ENCODE measurements at regions of chr11 and their contacts with region 1.

Region 1: GRCh38 chr11:123707606-123708205 is 33.8 kb downstream of the ZNF202 start:
- DNase-seq: peak; percentile 78
- H3K4me3 Mint-ChIP-seq: no peak overlapping the region
- H3K27ac Mint-ChIP-seq: no peak overlapping the region
- H3K4me1 Mint-ChIP-seq: no peaks in the 10 kb centered on the region
- H3K27me3 Mint-ChIP-seq: peaks cover 5% of the 10 kb centered on the region

Region 2: DNA sequence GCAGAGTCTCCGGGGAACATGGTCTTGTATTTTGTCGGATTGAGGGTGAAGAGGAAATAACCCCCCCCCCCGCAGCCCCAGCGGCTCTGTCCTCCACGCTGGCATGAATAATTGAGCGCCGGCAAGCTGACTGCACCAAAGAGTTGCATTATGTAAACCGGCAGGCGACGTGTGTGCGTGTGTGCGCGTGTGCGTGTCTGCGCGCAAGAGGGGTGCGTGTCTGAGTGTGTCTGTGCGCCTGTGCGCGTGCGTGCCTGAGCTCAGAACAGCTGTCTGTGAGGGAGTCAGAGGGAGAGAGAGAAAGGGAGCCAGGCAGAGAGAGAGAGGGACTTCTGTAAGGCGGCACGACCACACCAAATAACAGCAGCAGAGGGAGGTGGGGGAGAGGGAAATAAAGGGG is 147.7 kb before region 1 on chr11:
- CTCF ChIA-PET with region 1: no interaction called
- DNase-seq: peak; percentile 65
- H3K4me3 Mint-ChIP-seq: peak overlapping the region; percentile 45
- H3K27ac Mint-ChIP-seq: peak overlapping the region; percentile 42
- H3K4me1 Mint-ChIP-seq: peaks cover 19% of the 10 kb centered on the region
- H3K27me3 Mint-ChIP-seq: peaks cover 16% of the 10 kb centered on the region

Region 3: DNA sequence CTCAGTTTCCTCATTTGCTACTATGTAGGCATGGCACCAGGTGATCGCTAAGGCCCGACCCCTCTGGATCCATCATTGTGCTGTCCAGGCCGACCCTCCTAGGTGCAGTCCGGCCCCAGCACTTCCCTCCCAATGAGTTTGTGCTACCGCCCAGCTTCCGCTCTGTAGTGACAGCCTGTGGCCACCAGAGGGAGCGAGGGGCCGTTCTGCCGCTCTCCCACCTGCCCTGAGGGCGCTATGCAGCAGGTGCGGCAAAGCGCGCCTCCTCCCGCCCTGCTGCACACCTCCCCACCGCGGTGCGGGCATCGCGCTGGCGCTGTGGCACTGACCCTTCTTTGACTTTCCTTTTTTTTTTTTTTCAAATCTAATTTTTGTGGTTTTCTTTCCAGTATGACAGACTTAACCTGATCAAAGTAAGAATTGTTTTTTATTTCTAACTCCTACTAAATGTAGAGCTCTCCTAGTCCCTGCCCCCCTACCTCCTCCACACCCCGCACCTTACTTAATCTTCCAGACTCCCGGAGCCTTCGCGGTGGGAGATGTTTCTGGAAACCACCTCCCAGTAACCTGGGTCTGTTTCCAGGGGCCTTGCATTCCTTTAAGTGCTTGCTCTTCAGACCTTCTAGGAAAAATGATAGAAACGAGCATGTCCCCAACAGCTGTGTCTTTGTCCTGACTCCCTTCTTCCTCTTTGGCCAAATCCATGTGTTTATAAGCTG is 127.0 kb before region 1 on chr11:
- CTCF ChIA-PET with region 1: interaction called, 18 read pairs
- DNase-seq: peak; percentile 80
- H3K4me3 Mint-ChIP-seq: no peak overlapping the region
- H3K27ac Mint-ChIP-seq: peak overlapping the region; percentile 24
- H3K4me1 Mint-ChIP-seq: peaks cover 18% of the 10 kb centered on the region
- H3K27me3 Mint-ChIP-seq: no peaks in the 10 kb centered on the region

Region 4: GRCh38 chr11:123640677-123641494 is 66.8 kb before region 1 on chr11:
- CTCF ChIA-PET with region 1: interaction called, 212 read pairs
- DNase-seq: peak; percentile 64
- H3K4me3 Mint-ChIP-seq: no peak overlapping the region
- H3K27ac Mint-ChIP-seq: no peak overlapping the region
- H3K4me1 Mint-ChIP-seq: no peaks in the 10 kb centered on the region
- H3K27me3 Mint-ChIP-seq: peaks cover 42% of the 10 kb centered on the region

Region 5: GRCh38 chr11:123654566-123655081 is 53.1 kb before region 1 on chr11 and contains the start of gene SCN3B:
- CTCF ChIA-PET with region 1: interaction called, 12 read pairs
- DNase-seq: peak; percentile 50
- H3K4me3 Mint-ChIP-seq: peak within 1 kb of the TSS; percentile 66
- H3K27ac Mint-ChIP-seq: no peak within 1 kb of the TSS
- H3K4me1 Mint-ChIP-seq: peaks cover 19% of the 10 kb centered on the region
- H3K27me3 Mint-ChIP-seq: peaks cover 55% of the 10 kb centered on the region

Region 6: DNA sequence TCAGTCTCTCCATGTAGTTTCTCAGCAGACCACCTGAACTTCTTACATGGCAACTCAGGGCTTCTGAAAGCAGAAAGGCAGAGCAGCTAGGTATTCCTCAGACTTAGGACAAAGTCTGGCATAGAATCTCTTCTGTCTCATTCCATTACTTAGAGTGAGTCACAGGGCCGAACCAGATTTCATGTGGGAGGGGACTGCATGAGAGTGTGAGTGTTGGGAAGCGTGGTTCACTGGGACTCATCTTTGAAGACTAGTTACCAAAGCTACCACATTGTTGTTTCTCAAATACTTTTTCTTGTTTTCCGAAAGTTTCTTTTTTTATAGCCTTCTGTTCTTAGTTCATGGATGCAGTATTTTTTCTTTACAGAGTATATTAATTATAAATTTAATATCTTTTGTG is 17.2 kb before region 1 on chr11:
- CTCF ChIA-PET with region 1: interaction called, 10 read pairs
- DNase-seq: no peak
- H3K4me3 Mint-ChIP-seq: no peak overlapping the region
- H3K27ac Mint-ChIP-seq: no peak overlapping the region
- H3K4me1 Mint-ChIP-seq: no peaks in the 10 kb centered on the region
- H3K27me3 Mint-ChIP-seq: peaks cover 5% of the 10 kb centered on the region

Region 7: GRCh38 chr11:123719452-123719851 is 11.7 kb after region 1 on chr11:
- CTCF ChIA-PET with region 1: interaction called, 12 read pairs
- DNase-seq: no peak
- H3K4me3 Mint-ChIP-seq: no peak overlapping the region
- H3K27ac Mint-ChIP-seq: no peak overlapping the region
- H3K4me1 Mint-ChIP-seq: no peaks in the 10 kb centered on the region
- H3K27me3 Mint-ChIP-seq: peaks cover 16% of the 10 kb centered on the region

Region 8: DNA sequence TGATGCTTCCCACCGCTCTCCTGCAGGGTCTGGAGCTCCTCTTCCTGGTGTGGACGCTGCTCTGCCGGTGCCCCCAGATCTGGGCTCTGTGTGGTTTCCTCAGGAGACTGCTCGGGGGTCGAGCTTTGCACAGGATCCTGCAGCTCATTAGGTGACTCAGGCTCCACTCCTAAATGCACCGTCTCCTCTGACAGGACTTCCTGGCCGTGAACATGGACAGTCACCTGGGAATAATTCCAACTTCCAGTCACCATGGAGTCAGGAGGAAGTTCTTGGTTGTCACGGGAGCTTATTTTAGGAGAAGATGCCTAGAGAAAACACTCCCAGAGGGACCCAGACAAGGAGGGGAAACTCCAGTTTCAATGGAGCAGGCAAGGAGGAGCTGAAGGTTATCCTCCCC is 21.9 kb after region 1 on chr11:
- CTCF ChIA-PET with region 1: interaction called, 14 read pairs
- DNase-seq: no peak
- H3K4me3 Mint-ChIP-seq: no peak overlapping the region
- H3K27ac Mint-ChIP-seq: no peak overlapping the region
- H3K4me1 Mint-ChIP-seq: no peaks in the 10 kb centered on the region
- H3K27me3 Mint-ChIP-seq: no peaks in the 10 kb centered on the region

Measured in activated naive CD4-positive, alpha-beta T cell treated with anti-CD3 and anti-CD28 coated beads, Interleukin-2, amount 10 ng/mL, durations not matched to agents 7 days and 5 days (primary cell).